ENCODE measurements at regions of chr15 and their contacts with region 1.

Region 1: DNA sequence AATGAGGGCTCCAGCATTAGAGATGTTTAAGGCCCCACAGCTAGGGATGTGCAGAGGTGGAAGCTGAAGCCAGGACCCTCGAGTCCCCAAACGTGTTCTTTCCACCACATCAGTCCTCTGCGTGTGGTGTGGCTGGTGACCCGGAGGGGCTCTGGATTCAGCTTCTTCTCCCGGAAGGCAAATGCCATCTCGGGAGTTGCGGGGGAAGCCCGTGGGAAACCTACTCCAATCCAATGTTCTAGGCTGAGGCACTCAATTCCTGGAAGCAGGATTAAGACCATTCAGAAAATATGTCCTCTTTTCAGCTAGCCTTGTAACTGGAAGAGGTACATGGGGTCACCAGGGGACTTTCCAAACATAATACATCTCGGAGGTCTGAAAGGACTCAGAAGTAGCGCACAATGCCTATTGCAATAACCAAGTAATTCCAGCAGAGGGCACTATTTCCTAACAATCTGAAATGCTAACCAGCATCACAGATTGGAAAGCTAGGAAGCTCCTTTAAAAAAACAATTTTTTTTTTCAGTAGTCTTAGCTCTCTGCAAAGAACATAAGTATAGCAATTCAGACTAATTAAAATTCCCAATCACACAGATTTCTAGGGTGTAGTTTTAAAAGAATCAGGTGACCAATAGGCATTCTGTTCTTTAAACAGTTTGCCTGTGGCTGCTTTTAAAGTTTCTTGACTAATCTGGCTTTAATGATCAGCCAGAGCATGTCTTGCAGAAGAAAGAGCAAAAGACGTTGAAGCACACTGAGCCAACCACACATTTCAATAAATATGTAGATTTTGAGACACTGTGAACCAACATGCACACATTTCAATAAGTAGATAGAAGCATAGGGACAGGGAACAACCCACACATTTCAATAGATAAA is 36.1 kb downstream of the BNC1 start:
- DNase-seq: peak; percentile 26 to 69 (median 44)
- ATAC-seq: peak; percentile 85
- H3K4me3 ChIP-seq: no peak overlapping the region
- H3K27ac ChIP-seq: no peak overlapping the region
- H3K4me1 ChIP-seq: no peaks in the 10 kb centered on the region
- H3K27me3 ChIP-seq: peaks cover 3 to 17% of the 10 kb centered on the region in 2 experiments; a peak in 3 of 5 replicates
- CTCF ChIP-seq: peak; percentile 71 to 91 (median 85)
- EP300 ChIP-seq: no peak
- POLR2A ChIP-seq: no peak
- RAD21 ChIP-seq: peak; percentile 84 to 94

Region 2: DNA sequence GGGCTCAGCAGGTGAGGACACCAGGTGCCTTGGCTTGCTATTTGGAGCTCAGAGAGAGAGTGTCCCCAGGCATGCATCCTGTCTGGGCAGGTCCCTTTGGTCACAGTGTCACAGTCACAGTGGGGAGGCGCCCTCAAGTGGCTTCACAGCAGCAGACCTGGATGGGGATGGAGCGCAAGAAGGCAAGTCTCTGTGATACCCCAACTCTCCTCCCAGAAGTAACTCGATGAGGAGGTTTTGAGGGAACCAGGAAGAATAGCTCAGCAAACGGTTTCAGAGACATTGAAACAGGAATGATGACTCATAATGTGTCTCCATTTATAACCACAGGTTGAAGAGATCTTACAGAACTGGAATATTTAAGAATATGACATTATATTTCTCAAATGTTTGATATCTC is 132.3 kb after region 1 on chr15:
- CTCF ChIA-PET with region 1: no interaction called
- POLR2A ChIA-PET with region 1: no interaction called
- in situ Hi-C with region 1: no loop called
- intact Hi-C with region 1: loop called (anchors 1 kb)
- DNase-seq: peak; percentile 23 to 63 (median 44)
- ATAC-seq: peak; percentile 99
- H3K4me3 ChIP-seq: no peak overlapping the region
- H3K27ac ChIP-seq: no peak overlapping the region
- H3K4me1 ChIP-seq: peaks cover 0 to 4% of the 10 kb centered on the region in 2 experiments; a peak in 2 of 5 replicates
- H3K27me3 ChIP-seq: peaks cover 9 to 22% of the 10 kb centered on the region in 2 experiments
- CTCF ChIP-seq: peak; percentile 69 to 74 (median 70)
- EP300 ChIP-seq: no peak
- POLR2A ChIP-seq: no peak
- RAD21 ChIP-seq: peak; percentile 53 to 74; a peak in 3 of 4 replicates

Region 3: GRCh38 chr15:83422081-83422480 is 173.7 kb after region 1 on chr15:
- CTCF ChIA-PET with region 1: no interaction called
- POLR2A ChIA-PET with region 1: no interaction called
- in situ Hi-C with region 1: loop called (anchors 5 kb)
- intact Hi-C with region 1: no loop called
- DNase-seq: no peak
- ATAC-seq: no peak
- H3K4me3 ChIP-seq: no peak overlapping the region
- H3K27ac ChIP-seq: no peak overlapping the region
- H3K4me1 ChIP-seq: no peaks in the 10 kb centered on the region
- H3K27me3 ChIP-seq: peaks cover 12 to 19% of the 10 kb centered on the region in 2 experiments; a peak in 4 of 5 replicates
- CTCF ChIP-seq: no peak
- EP300 ChIP-seq: no peak
- POLR2A ChIP-seq: no peak
- RAD21 ChIP-seq: no peak

Measured in K562 (cell line).